Naive thymus-derived CD4-positive, alpha-beta T cell (primary cell): ENCODE measurements at regions of chr1 and their contacts with region 1.

Region 1: DNA sequence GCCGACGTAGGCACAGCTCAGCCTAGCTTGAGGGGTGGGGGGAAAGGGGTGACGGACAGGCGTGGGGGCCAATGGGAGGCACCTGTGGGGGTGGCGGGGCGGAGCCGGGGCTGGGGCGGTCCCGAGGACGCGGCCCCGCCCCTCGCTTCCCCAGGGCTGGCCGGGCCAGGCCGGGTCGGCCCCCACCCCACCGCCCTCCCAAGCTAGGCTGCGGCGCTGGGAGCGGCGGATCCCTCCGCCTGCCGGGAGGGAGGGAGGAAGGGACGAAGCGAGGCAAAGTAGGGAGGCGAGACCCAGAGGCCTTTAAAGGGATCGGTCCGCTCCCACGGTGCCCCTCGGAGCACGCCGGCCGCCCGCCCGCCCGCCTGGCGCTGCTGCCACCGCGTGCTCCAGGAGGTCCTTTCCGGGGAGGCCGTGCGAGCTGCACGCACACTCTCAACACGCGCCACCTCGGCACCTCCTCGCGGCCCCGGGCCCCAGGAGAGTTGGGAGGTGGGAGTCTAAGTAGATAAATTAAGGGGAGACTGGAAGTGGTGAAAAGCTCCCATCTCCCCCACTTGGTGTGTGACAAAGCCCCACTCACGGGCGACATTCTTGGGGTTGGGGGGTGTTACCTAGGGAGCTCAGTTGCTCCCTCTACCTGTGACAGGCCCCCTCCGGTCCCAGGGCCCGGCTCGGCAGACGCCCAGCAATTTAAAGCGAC is 373 bp upstream of the MEF2D start:
- DNase-seq: peak; percentile 91 to 97 (median 93)
- ATAC-seq: peak; percentile 83
- H3K4me3 ChIP-seq: peak overlapping the region; percentile 81
- H3K4me3 Mint-ChIP-seq: peak overlapping the region; percentile 88 to 97 (median 92)
- H3K27ac ChIP-seq: peak overlapping the region; percentile 99
- H3K27ac Mint-ChIP-seq: peak overlapping the region; percentile 93 to 100 (median 99)
- H3K4me1 ChIP-seq: peaks cover 70 to 71% of the 10 kb centered on the region in 2 donors
- H3K4me1 Mint-ChIP-seq: peaks cover 55 to 75% (median 71%) of the 10 kb centered on the region in 7 donors
- H3K27me3 ChIP-seq: no peaks in the 10 kb centered on the region
- H3K27me3 Mint-ChIP-seq: no peaks in the 10 kb centered on the region

Region 2: GRCh38 chr1:156338180-156338973 is 162.6 kb before region 1 on chr1 and contains the starts of genes CCT3 and TSACC:
- CTCF ChIA-PET with region 1: no interaction called
- POLR2A ChIA-PET with region 1: no interaction called
- intact Hi-C with region 1: loop called in 1 of 2 experiments (anchors 1 kb)
- DNase-seq: peak; percentile 99 to 100 (median 100)
- ATAC-seq: peak; percentile 97
- H3K4me3 ChIP-seq: peak within 1 kb of the TSS; percentile 83
- H3K4me3 Mint-ChIP-seq: peak within 1 kb of the TSS; percentile 97 to 99 (median 99)
- H3K27ac ChIP-seq: peak within 1 kb of the TSS; percentile 76
- H3K27ac Mint-ChIP-seq: peak within 1 kb of the TSS; percentile 97 to 99 (median 98)
- H3K4me1 ChIP-seq: peaks cover 11 to 17% of the 10 kb centered on the region in 2 donors
- H3K4me1 Mint-ChIP-seq: peaks cover 16 to 49% (median 40%) of the 10 kb centered on the region in 7 donors
- H3K27me3 ChIP-seq: no peaks in the 10 kb centered on the region
- H3K27me3 Mint-ChIP-seq: peaks cover 0 to 12% (median 0%) of the 10 kb centered on the region in 5 donors
- total RNA-seq, gene CCT3: 78.0 to 282 (median 114) TPM
- total RNA-seq, gene TSACC: 1.1 TPM in 1 of 5 experiments, not detected in the others

Region 3: GRCh38 chr1:156489166-156489934 is 11.6 kb before region 1 on chr1:
- CTCF ChIA-PET with region 1: interaction called, 8 read pairs
- POLR2A ChIA-PET with region 1: interaction called, 256 read pairs
- intact Hi-C with region 1: loop called in 1 of 2 experiments (anchors 1 kb)
- DNase-seq: peak in 6 of 9 donors; percentile 23 to 53 (median 36)
- ATAC-seq: peak; percentile 53
- H3K4me3 ChIP-seq: peak overlapping the region; percentile 26
- H3K4me3 Mint-ChIP-seq: peak overlapping the region; percentile 74 to 88 (median 80)
- H3K27ac ChIP-seq: peak overlapping the region; percentile 59
- H3K27ac Mint-ChIP-seq: peak overlapping the region; percentile 65 to 99 (median 94)
- H3K4me1 ChIP-seq: peaks cover 75 to 92% of the 10 kb centered on the region in 2 donors
- H3K4me1 Mint-ChIP-seq: peaks cover 78 to 97% (median 90%) of the 10 kb centered on the region in 7 donors
- H3K27me3 ChIP-seq: no peaks in the 10 kb centered on the region
- H3K27me3 Mint-ChIP-seq: no peaks in the 10 kb centered on the region

Region 4: GRCh38 chr1:156560585-156561183 is 59.7 kb after region 1 on chr1:
- CTCF ChIA-PET with region 1: no interaction called
- POLR2A ChIA-PET with region 1: no interaction called
- intact Hi-C with region 1: no loop called
- DNase-seq: no peak
- ATAC-seq: no peak
- H3K4me3 ChIP-seq: no peak overlapping the region
- H3K4me3 Mint-ChIP-seq: no peak overlapping the region
- H3K27ac ChIP-seq: no peak overlapping the region
- H3K27ac Mint-ChIP-seq: no peak overlapping the region
- H3K4me1 ChIP-seq: no peaks in the 10 kb centered on the region
- H3K4me1 Mint-ChIP-seq: peaks cover 0 to 1% (median 0%) of the 10 kb centered on the region in 7 donors
- H3K27me3 ChIP-seq: no peaks in the 10 kb centered on the region
- H3K27me3 Mint-ChIP-seq: no peaks in the 10 kb centered on the region

Region 5: GRCh38 chr1:156591432-156592157 is 90.6 kb after region 1 on chr1 and contains the start of gene NAXE:
- CTCF ChIA-PET with region 1: no interaction called
- POLR2A ChIA-PET with region 1: interaction called, 27 read pairs
- intact Hi-C with region 1: no loop called
- DNase-seq: peak; percentile 54 to 81 (median 65)
- ATAC-seq: peak; percentile 97
- H3K4me3 ChIP-seq: peak within 1 kb of the TSS; percentile 69
- H3K4me3 Mint-ChIP-seq: peak within 1 kb of the TSS; percentile 82 to 93 (median 89)
- H3K27ac ChIP-seq: peak within 1 kb of the TSS; percentile 89
- H3K27ac Mint-ChIP-seq: peak within 1 kb of the TSS; percentile 86 to 98 (median 93)
- H3K4me1 ChIP-seq: peaks cover 8 to 12% of the 10 kb centered on the region in 2 donors
- H3K4me1 Mint-ChIP-seq: peaks cover 16 to 32% (median 28%) of the 10 kb centered on the region in 7 donors
- H3K27me3 ChIP-seq: no peaks in the 10 kb centered on the region
- H3K27me3 Mint-ChIP-seq: no peaks in the 10 kb centered on the region
- total RNA-seq, gene NAXE: 25.6 to 58.8 (median 40.7) TPM

Region 6: GRCh38 chr1:156746728-156747631 is 246.0 kb after region 1 on chr1:
- CTCF ChIA-PET with region 1: no interaction called
- POLR2A ChIA-PET with region 1: no interaction called
- intact Hi-C with region 1: loop called (anchors 1 to 2 kb)
- DNase-seq: peak in 5 of 9 donors; percentile 31 to 69 (median 45)
- ATAC-seq: no peak
- H3K4me3 ChIP-seq: peak overlapping the region; percentile 76
- H3K4me3 Mint-ChIP-seq: peak overlapping the region; percentile 88 to 98 (median 94)
- H3K27ac ChIP-seq: peak overlapping the region; percentile 90
- H3K27ac Mint-ChIP-seq: peak overlapping the region; percentile 82 to 95 (median 91)
- H3K4me1 ChIP-seq: peaks cover 35 to 43% of the 10 kb centered on the region in 2 donors
- H3K4me1 Mint-ChIP-seq: peaks cover 50 to 65% (median 55%) of the 10 kb centered on the region in 7 donors
- H3K27me3 ChIP-seq: no peaks in the 10 kb centered on the region
- H3K27me3 Mint-ChIP-seq: no peaks in the 10 kb centered on the region

Region 7: GRCh38 chr1:156801409-156802121 is 300.6 kb after region 1 on chr1:
- CTCF ChIA-PET with region 1: no interaction called
- POLR2A ChIA-PET with region 1: no interaction called
- intact Hi-C with region 1: no loop called
- DNase-seq: no peak
- ATAC-seq: no peak
- H3K4me3 ChIP-seq: no peak overlapping the region
- H3K4me3 Mint-ChIP-seq: peak overlapping the region in 1 of 10 donors; percentile 5
- H3K27ac ChIP-seq: no peak overlapping the region
- H3K27ac Mint-ChIP-seq: peak overlapping the region in 6 of 9 donors; percentile 5 to 77 (median 41)
- H3K4me1 ChIP-seq: no peaks in the 10 kb centered on the region
- H3K4me1 Mint-ChIP-seq: peaks cover 0 to 43% (median 5%) of the 10 kb centered on the region in 7 donors
- H3K27me3 ChIP-seq: no peaks in the 10 kb centered on the region
- H3K27me3 Mint-ChIP-seq: no peaks in the 10 kb centered on the region

Region 8: DNA sequence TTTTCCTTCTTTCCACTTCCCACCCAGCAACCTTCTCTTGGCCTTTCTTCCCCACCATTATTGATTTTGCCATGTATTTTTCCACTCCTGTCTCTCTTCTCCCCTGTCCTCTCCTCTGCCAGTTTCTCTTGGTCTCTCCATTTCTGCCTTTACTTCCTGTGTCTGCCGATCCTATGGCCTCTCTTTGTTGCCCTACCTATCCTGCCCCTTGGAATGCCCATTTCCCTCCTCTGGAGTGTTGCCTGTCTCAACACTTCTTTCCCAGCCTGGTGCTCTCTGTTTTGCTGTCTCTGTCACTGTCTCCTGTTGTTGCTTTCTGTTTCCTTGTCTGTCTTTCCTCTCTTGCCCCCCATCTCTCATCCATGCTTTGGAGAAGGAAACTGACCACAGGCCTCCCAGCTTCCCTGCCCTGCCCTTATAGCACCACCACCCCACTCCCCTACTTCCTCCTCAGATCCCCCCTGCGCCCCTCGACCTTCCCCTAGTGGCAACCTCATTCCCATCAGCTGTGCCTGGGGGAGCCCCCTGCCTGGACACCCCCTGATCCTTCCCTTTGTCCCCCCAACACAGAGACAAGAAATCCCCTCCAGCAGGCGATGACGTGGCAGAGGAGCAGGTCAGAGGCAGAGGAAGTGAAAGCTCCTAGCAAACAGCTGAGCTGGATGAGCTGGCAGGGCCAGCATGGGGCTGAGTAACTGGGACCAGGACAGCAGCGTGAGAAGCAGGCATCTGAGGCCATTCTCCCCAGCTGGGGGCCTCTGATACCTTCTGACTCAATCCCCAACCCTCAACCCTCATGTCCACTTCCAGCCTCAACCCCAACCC is 605.3 kb after region 1 on chr1:
- CTCF ChIA-PET with region 1: no interaction called
- POLR2A ChIA-PET with region 1: no interaction called
- intact Hi-C with region 1: no loop called
- DNase-seq: peak in 2 of 9 donors; percentile 16 to 34
- ATAC-seq: peak; percentile 93
- H3K4me3 ChIP-seq: no peak overlapping the region
- H3K4me3 Mint-ChIP-seq: no peak overlapping the region
- H3K27ac ChIP-seq: no peak overlapping the region
- H3K27ac Mint-ChIP-seq: peak overlapping the region in 3 of 9 donors; percentile 7 to 53 (median 28)
- H3K4me1 ChIP-seq: no peaks in the 10 kb centered on the region
- H3K4me1 Mint-ChIP-seq: peaks cover 0 to 14% (median 0%) of the 10 kb centered on the region in 7 donors
- H3K27me3 ChIP-seq: peaks cover 5 to 6% of the 10 kb centered on the region in 2 donors
- H3K27me3 Mint-ChIP-seq: peaks cover 7 to 69% (median 35%) of the 10 kb centered on the region in 5 donors